CD14-positive monocyte (primary cell): ENCODE measurements at regions of chr11 and their contacts with region 1.

Region 1: DNA sequence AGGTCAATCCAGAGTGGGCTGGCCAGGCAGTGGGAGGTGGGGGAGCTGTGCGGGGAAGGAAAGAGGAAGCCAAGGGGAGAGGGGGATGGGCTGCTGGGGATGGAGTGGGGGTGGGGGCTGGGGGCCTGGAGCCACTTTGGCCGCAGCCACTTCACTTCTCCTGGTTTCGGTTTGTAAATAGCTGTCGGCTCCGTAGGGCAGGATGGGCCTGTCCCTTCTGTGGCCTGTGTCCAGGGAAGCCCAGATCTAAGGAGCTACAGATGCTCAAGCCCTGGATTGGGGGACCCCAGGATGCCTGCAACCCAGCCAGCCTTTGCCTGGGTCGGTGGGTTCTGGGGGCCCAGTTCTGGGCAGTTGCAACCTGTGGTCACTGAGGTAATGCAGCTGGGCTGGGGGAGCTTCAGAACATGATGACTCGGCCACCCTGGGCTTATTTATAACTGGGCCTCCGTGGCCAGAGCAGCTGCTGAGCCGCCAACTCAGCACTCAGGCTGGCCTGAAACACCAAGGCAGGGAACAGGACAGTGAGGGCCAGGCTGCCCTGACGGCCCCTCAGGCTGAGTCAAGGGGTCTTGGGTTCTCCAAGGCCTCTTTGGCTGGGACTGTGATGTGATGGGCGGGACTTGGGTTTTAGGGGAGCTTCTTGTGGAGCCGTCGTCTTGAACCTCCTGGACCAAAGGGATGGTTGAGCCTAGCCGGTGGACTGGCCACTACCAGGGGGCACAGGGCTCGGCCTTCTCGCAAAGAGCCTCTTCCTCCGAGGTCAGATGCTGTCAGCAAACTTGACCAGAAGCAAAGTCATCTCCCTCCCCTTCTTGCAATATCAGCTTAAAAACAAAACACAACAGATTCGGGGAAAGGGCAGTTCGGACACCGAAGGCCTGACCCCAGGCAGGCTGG is 15.0 kb upstream of the SLC39A13 start:
- DNase-seq: peak; percentile 80 to 86 (median 83)
- H3K4me3 ChIP-seq: peak overlapping the region; percentile 5 to 65 (median 51)
- H3K4me3 Mint-ChIP-seq: peak overlapping the region; percentile 80 to 90
- H3K27ac ChIP-seq: peak overlapping the region; percentile 98 to 100
- H3K27ac Mint-ChIP-seq: peak overlapping the region; percentile 99 to 100 (median 100)
- H3K4me1 ChIP-seq: peaks cover 81 to 82% of the 10 kb centered on the region in 2 donors
- H3K4me1 Mint-ChIP-seq: peaks cover 74% of the 10 kb centered on the region
- H3K27me3 ChIP-seq: no peaks in the 10 kb centered on the region
- H3K27me3 Mint-ChIP-seq: no peaks in the 10 kb centered on the region
- CTCF ChIP-seq: no peak

Region 2: DNA sequence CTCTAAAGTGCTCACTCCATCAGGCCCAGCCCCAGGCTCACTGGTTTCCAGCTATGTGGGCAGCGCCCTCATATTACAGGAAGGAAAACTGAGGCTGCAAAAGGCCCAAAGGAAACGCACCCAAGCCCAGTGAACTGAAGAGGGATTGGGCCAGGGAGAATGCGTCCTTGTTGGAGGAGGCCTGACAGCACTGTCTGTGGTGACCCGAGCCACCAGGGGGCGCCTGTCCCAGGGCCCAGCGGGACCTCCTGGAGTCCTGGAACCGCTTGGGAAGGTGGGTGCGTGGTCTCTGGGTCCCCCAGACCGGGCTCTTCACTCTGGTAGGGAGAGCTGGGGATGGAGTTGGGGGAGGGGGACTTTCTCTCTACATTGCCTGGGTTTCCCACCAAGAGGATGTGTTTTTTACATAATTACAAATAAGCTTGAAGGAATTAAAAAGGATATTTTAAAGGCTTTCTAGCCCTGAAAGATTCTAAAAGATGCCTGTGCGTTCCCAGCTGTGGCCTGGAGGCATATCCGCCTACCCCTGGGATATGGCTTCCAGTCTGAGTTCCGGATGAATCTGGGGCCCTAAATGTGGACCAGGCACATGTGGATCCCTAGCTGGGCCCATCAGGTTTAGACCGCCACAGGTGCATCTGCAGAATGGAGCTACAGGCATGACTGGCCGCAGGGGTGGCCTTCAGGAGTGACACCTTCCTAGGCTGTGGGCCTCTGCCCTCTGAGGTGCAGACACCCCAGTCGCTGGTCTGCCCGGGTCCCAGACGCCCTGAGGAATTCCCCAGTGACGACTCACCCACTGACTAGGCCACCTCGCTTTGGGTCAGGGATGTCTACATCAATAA is 19.3 kb before region 1 on chr11:
- intact Hi-C with region 1: loop called in 1 of 2 experiments (anchors 1 kb)
- DNase-seq: peak; percentile 71 to 85 (median 77)
- H3K4me3 ChIP-seq: peak overlapping the region; percentile 84 to 99 (median 97)
- H3K4me3 Mint-ChIP-seq: peak overlapping the region; percentile 98 to 99
- H3K27ac ChIP-seq: peak overlapping the region; percentile 96 to 97
- H3K27ac Mint-ChIP-seq: peak overlapping the region in 1 of 7 donors; percentile 89
- H3K4me1 ChIP-seq: peaks cover 58 to 72% of the 10 kb centered on the region in 2 donors
- H3K4me1 Mint-ChIP-seq: peaks cover 60% of the 10 kb centered on the region
- H3K27me3 ChIP-seq: no peaks in the 10 kb centered on the region
- H3K27me3 Mint-ChIP-seq: peaks cover 0 to 4% (median 2%) of the 10 kb centered on the region in 3 donors
- CTCF ChIP-seq: peak; percentile 94